Panc1 (cell line): ENCODE measurements at regions of chrX and their contacts with region 1.

Region 1: GRCh38 chrX:51336584-51336983 is 4.0 kb downstream of the NUDT10 start:
- DNase-seq: no peak
- ATAC-seq: peak; percentile 86
- H3K4me3 ChIP-seq: no peak overlapping the region
- H3K27ac ChIP-seq: no peak overlapping the region
- H3K4me1 ChIP-seq: no peaks in the 10 kb centered on the region
- H3K27me3 ChIP-seq: no peaks in the 10 kb centered on the region
- CTCF ChIP-seq: peak; percentile 64

Region 2: GRCh38 chrX:51420610-51421009 is 84.0 kb after region 1 on chrX:
- CTCF ChIA-PET with region 1: interaction called, 14 read pairs
- POLR2A ChIA-PET with region 1: no interaction called
- in situ Hi-C with region 1: no loop called
- intact Hi-C with region 1: loop called (anchors 2 kb)
- DNase-seq: peak; percentile 7
- ATAC-seq: no peak
- H3K4me3 ChIP-seq: no peak overlapping the region
- H3K27ac ChIP-seq: no peak overlapping the region
- H3K4me1 ChIP-seq: no peaks in the 10 kb centered on the region
- H3K27me3 ChIP-seq: no peaks in the 10 kb centered on the region; the same call in 1 of the 2 replicates
- CTCF ChIP-seq: peak; percentile 74

Region 3: GRCh38 chrX:51461053-51462044 is 124.8 kb after region 1 on chrX:
- CTCF ChIA-PET with region 1: interaction called, 11 read pairs
- POLR2A ChIA-PET with region 1: no interaction called
- in situ Hi-C with region 1: no loop called
- intact Hi-C with region 1: loop called (anchors 5 kb)
- DNase-seq: peak; percentile 47
- ATAC-seq: no peak
- H3K4me3 ChIP-seq: no peak overlapping the region
- H3K27ac ChIP-seq: no peak overlapping the region
- H3K4me1 ChIP-seq: no peaks in the 10 kb centered on the region
- H3K27me3 ChIP-seq: no peaks in the 10 kb centered on the region
- CTCF ChIP-seq: peak; percentile 77

Region 4: GRCh38 chrX:51902510-51903050 is 566.0 kb after region 1 on chrX:
- CTCF ChIA-PET with region 1: no interaction called
- POLR2A ChIA-PET with region 1: no interaction called
- in situ Hi-C with region 1: no loop called
- intact Hi-C with region 1: no loop called
- DNase-seq: no peak
- ATAC-seq: no peak
- H3K4me3 ChIP-seq: no peak overlapping the region
- H3K27ac ChIP-seq: no peak overlapping the region
- H3K4me1 ChIP-seq: no peaks in the 10 kb centered on the region
- H3K27me3 ChIP-seq: no peaks in the 10 kb centered on the region
- CTCF ChIP-seq: no peak